Prostate gland (tissue), 2 donors: ENCODE measurements at regions of chr2 and their contacts with region 1.

Region 1: GRCh38 chr2:112749755-112750559 is 14.5 kb downstream of the CKAP2L start:
- DNase-seq: peak; percentile 52
- H3K4me3 ChIP-seq: no peak overlapping the region
- H3K27ac ChIP-seq: no peak overlapping the region
- H3K4me1 ChIP-seq: no peaks in the 10 kb centered on the region
- H3K27me3 ChIP-seq: no peaks in the 10 kb centered on the region
- CTCF ChIP-seq: peak; percentile 57 to 80 (median 72)
- POLR2A ChIP-seq: no peak

Region 2: GRCh38 chr2:112493858-112494648 is 255.9 kb before region 1 on chr2:
- intact Hi-C with region 1: no loop called
- DNase-seq: no peak
- H3K4me3 ChIP-seq: no peak overlapping the region
- H3K27ac ChIP-seq: no peak overlapping the region
- H3K4me1 ChIP-seq: no peaks in the 10 kb centered on the region
- H3K27me3 ChIP-seq: no peaks in the 10 kb centered on the region
- CTCF ChIP-seq: no peak
- POLR2A ChIP-seq: no peak

Region 3: DNA sequence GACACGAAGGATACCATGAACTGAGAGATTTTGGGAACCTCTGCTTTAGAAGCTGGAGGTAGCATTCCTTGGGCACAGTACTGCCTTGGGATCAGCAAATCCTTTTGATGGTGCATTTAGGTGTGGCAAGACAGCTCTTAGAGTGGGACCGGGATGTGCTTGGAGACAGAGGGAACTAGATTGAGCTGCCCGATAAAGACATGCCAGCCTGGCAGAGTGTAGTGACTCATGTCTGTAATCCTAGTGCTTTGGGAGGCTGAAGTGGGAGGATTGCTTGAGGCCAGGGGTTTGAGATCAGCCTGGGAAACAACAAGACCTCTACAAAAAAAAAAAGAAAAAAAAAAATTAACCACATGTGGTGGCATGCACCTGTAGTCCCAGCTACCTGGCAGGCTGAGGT is 178.9 kb after region 1 on chr2:
- intact Hi-C with region 1: no loop called
- DNase-seq: no peak
- H3K4me3 ChIP-seq: no peak overlapping the region
- H3K27ac ChIP-seq: no peak overlapping the region
- H3K4me1 ChIP-seq: no peaks in the 10 kb centered on the region
- H3K27me3 ChIP-seq: no peaks in the 10 kb centered on the region
- CTCF ChIP-seq: no peak
- POLR2A ChIP-seq: no peak

Region 4: DNA sequence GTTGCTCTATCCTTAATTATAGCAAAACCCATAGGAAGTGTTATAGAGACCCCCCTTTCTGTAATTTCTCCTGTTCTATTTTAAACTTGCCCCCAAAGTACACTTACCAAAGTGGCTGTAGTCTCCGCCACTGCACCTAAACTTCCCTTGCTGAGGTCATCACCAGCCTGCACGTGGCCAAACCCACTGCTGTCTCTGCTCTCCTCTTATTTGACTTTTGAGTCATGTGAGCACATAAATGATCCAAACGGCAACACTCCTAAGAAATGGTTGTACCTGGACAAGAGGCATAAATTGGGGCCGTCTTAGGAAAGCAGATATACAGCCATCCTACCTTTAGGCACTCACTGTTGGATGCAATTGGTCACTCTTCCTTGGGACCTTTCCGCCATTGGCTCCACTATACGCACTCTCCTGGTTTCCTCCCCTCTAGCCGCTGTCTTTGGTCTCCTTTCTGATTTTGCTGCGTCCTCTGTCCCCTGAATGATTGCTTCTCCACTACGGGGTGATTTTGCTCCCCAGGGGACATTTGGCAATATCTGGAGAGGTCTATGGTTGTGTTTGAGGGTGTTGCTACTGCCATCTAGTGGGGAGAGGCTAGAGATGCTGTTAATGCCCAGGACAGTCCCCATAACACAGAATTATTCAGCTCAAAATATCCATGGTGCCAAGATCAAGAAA is 208.6 kb after region 1 on chr2:
- intact Hi-C with region 1: loop called (anchors 10 kb)
- DNase-seq: peak; percentile 16
- H3K4me3 ChIP-seq: no peak overlapping the region
- H3K27ac ChIP-seq: no peak overlapping the region
- H3K4me1 ChIP-seq: no peaks in the 10 kb centered on the region
- H3K27me3 ChIP-seq: no peaks in the 10 kb centered on the region
- CTCF ChIP-seq: peak; percentile 30 to 68 (median 46)
- POLR2A ChIP-seq: no peak